ENCODE measurements at regions of chr11 and their contacts with region 1.

Region 1: GRCh38 chr11:82682003-82682751 is 51.5 kb downstream of the FAM181B start:
- DNase-seq: no peak
- CTCF ChIP-seq: peak; percentile 51

Region 2: DNA sequence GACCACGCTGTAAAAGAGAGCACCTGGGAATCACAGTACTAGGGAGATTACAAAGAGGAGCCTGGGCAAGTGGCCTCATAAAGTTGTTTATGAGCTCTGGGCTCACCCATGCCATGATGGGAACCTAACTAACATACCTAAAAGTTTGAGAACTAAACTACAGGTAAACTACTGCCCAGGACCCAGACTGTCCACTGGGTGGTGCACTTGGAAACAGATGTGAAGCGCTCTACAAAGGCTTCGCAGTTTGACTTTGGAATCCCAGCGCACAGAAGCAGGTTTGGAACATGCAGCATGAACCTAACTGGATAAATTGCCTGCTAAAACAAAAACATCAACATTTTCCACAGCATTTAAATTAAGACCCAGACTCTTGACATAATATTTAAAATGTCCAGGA is 367.1 kb before region 1 on chr11:
- in situ Hi-C with region 1: loop called (anchors 25 kb)
- DNase-seq: no peak
- CTCF ChIP-seq: no peak

Region 3: DNA sequence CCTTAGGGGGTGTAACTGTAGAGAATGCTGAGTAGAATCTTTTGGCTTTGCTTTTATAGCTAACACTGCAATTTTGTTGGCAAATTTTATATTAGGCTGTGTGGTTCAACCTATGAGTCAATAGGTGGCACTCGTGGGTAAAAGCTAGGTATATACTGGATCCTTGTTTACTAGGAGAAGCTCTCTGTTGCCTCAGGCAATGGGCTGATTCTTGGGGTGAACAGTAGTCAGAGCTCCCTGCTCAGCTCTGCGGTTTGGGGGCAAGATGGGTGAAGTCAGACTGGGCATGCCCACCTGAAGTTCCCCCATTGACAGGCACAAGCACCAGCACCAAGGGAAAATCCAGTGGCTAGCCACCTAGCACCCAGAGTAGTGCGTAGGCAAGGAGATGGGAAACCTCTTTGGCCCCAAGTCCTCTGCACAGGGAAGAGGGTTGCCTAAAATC is 187.2 kb before region 1 on chr11:
- in situ Hi-C with region 1: loop called (anchors 25 kb)
- DNase-seq: peak; percentile 30
- CTCF ChIP-seq: no peak